Activated T-helper 2 cell treated with anti-CD3 and anti-CD28 coated beads, Interferon-gamma antibody, Interleukin-2, Interleukin-4, amounts not matched to agents 10 μg/mL and 5 μg/mL and 100 μg/mL, durations not matched to agents 14 hours and 24 hours and 36 hours (primary cell): ENCODE measurements at regions of chr6 and their contacts with region 1.

Region 1: GRCh38 chr6:31271641-31272357 is at the start of gene HLA-C:
- DNase-seq: peak; percentile 88
- H3K4me3 Mint-ChIP-seq: peak within 1 kb of the TSS; percentile 94
- H3K27ac Mint-ChIP-seq: peak within 1 kb of the TSS; percentile 98
- H3K4me1 Mint-ChIP-seq: peaks cover 34% of the 10 kb centered on the region
- H3K27me3 Mint-ChIP-seq: peaks cover 10% of the 10 kb centered on the region
- total RNA-seq, gene HLA-C: 895 and 906 TPM in 2 replicates

Region 2: DNA sequence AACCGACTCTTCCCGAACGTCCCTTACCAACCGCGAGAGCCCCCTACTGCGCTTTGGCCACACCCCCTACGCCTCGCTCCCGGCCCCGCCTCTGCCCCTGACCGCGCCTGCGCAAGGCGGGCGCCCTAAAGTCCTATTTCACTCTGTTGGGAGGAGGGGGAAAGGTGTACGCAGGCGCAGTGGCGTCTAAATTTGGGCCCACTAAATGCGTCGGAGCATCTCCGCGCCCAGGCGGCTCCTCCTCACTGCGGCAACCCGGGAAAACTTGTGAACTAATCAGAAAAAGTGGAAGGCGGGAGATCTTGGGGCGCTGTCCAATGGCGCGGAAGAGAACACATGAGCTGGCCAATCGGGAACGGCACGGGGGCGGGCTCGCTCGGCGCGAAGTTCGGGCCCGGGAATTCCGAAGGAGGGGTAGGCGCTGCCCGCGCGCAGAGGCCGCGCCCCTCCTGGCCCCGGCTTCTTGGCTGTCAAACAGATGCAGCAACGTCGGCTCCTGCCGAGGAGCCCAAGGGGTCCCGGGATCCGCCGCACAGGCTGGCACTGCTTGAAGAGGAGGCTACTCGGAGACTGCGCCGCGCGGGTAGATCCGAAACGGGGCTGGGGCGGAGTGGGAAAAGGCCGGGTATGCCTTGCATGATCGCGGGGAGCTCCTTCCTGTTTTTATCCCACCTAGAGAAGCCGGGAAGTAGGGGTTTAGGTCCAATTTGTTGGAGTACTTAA is 113.5 kb before region 1 on chr6 and contains the start of gene TCF19:
- intact Hi-C with region 1: loop called (anchors 1 kb)
- DNase-seq: peak; percentile 99
- H3K4me3 Mint-ChIP-seq: peak within 1 kb of the TSS; percentile 92
- H3K27ac Mint-ChIP-seq: peak within 1 kb of the TSS; percentile 87
- H3K4me1 Mint-ChIP-seq: peaks cover 32% of the 10 kb centered on the region
- H3K27me3 Mint-ChIP-seq: no peaks in the 10 kb centered on the region
- total RNA-seq, gene TCF19: 81.5 and 82.0 TPM in 2 replicates

Region 3: DNA sequence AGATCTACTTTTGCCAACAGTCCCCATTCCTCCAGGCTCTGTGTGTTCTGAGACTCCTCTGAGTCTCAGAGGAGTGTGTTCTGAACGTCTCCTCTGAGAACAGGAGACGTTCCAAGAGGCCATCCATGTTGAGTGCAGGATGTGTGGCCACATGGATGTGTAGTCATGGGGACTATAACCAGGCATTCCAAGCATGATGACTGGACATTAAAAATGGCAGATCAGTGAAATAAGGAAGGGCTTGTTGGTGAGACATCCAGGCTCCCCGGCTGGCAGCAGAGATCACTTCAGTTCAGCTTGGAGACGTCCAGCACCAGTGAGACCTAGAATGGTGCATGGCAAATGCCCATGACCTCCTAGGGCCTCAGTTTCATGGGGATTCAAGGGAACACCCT is 67.1 kb before region 1 on chr6:
- intact Hi-C with region 1: loop called (anchors 2 kb)
- DNase-seq: no peak
- H3K4me3 Mint-ChIP-seq: peak overlapping the region; percentile 90
- H3K27ac Mint-ChIP-seq: peak overlapping the region; percentile 98
- H3K4me1 Mint-ChIP-seq: peaks cover 33% of the 10 kb centered on the region
- H3K27me3 Mint-ChIP-seq: no peaks in the 10 kb centered on the region

Region 4: DNA sequence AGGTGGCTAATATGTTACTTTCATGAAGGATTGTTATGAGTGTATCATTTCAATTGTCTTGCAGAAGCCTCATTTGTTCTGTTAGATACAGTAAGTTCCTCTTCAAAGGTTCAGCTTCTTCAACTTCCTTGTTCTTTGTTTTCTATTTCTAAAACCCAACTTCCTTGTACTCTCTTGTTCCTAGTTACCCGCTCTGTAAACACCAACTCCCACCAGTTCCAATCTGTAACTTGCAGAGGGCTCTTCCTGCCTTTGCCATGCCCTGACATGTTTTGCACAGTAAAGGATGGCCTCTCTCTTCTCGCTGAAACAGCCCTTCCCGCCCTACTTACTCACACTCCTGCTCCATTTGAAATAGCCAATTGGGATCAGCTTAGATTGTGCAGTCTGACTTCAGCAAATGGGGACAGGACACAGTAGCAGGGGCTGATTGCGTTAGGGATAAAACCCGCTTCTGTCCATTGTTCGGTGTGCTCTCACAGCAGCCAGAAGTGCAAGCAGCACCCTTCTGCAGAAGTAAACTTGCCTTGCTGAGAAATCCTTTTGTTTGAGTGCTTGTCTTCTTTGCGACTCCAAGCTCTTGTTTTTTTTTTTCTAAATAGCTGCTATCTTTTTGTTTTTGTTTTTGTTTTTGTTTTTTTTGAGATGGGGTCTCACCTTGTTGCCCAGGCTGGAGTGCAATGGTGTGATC is 55.4 kb before region 1 on chr6:
- intact Hi-C with region 1: no loop called
- DNase-seq: no peak
- H3K4me3 Mint-ChIP-seq: no peak overlapping the region
- H3K27ac Mint-ChIP-seq: no peak overlapping the region
- H3K4me1 Mint-ChIP-seq: no peaks in the 10 kb centered on the region
- H3K27me3 Mint-ChIP-seq: peaks cover 9% of the 10 kb centered on the region

Region 5: DNA sequence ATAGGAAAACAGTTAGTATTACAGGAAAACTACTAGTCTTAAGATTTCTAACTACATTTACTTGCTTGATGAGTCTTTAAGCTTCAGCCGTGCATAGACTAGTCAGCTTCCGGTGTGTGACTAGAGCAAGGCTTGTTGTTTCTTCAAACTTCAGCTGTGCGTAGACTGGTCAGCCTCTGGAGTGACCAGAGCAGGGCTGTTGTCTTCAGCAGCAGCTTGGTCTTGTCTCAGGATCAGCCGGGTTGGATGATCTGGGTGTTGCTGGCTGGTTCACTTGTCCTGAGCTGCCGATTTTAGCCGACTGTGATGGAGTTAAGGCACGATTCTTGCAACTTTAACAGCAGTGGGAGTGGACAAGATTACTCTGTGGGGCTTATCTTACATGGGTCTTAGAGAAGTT is 44.7 kb before region 1 on chr6:
- intact Hi-C with region 1: no loop called
- DNase-seq: no peak
- H3K4me3 Mint-ChIP-seq: no peak overlapping the region
- H3K27ac Mint-ChIP-seq: no peak overlapping the region
- H3K4me1 Mint-ChIP-seq: no peaks in the 10 kb centered on the region
- H3K27me3 Mint-ChIP-seq: peaks cover 16% of the 10 kb centered on the region

Region 6: GRCh38 chr6:31356946-31357466 is 85.2 kb after region 1 on chr6 and contains the start of gene HLA-B:
- intact Hi-C with region 1: loop called (anchors 1 kb)
- DNase-seq: peak; percentile 55
- H3K4me3 Mint-ChIP-seq: peak within 1 kb of the TSS; percentile 93
- H3K27ac Mint-ChIP-seq: peak within 1 kb of the TSS; percentile 96
- H3K4me1 Mint-ChIP-seq: peaks cover 45% of the 10 kb centered on the region
- H3K27me3 Mint-ChIP-seq: peaks cover 15% of the 10 kb centered on the region
- total RNA-seq, gene HLA-B: 3,580 and 3,693 TPM in 2 replicates